IMR-90 (cell line): ENCODE measurements at regions of chr5 and their contacts with region 1.

Region 1: GRCh38 chr5:92909602-92909962 is 671.4 kb downstream of the NR2F1-AS1 start:
- DNase-seq: peak; percentile 11
- ATAC-seq: no peak
- H3K4me3 ChIP-seq: no peak overlapping the region
- H3K27ac ChIP-seq: no peak overlapping the region
- H3K4me1 ChIP-seq: peaks cover 3% of the 10 kb centered on the region
- H3K27me3 ChIP-seq: no peaks in the 10 kb centered on the region
- CTCF ChIP-seq: peak; percentile 43
- POLR2A ChIP-seq: no peak
- RAD21 ChIP-seq: peak; percentile 49

Region 2: GRCh38 chr5:92560698-92561361 is 348.8 kb before region 1 on chr5:
- CTCF ChIA-PET with region 1: no interaction called
- POLR2A ChIA-PET with region 1: no interaction called
- dilution Hi-C with region 1: no loop called
- in situ Hi-C with region 1: no loop called
- intact Hi-C with region 1: loop called (anchors 10 kb)
- DNase-seq: peak; percentile 59
- ATAC-seq: peak; percentile 24; the same call in 1 of the 2 replicates
- H3K4me3 ChIP-seq: no peak overlapping the region
- H3K27ac ChIP-seq: no peak overlapping the region
- H3K4me1 ChIP-seq: peaks cover 10% of the 10 kb centered on the region
- H3K27me3 ChIP-seq: no peaks in the 10 kb centered on the region
- CTCF ChIP-seq: no peak
- POLR2A ChIP-seq: no peak
- RAD21 ChIP-seq: no peak

Region 3: DNA sequence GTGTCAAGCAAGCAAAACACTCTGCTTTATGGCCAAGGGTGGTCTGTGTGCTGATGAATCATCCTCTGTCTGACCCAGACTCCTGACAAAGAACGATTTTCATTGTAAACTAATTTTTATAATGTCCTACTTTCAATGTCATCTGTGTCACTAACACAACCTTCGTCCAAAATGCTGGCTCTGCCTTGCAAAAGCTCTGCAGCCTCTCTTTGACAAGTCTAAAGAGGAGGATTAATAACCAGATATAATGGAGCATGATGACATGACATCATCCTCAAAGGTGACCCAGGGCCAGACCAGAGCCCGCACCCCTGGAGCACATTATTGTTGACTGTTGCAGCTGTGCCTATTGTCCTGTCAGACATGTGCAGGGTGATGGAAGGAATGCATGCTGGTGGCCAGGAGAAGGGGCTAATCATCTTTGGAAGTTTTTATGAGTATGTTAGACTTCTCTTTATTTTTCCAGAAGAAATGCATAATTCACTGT is 82.0 kb after region 1 on chr5:
- CTCF ChIA-PET with region 1: no interaction called
- POLR2A ChIA-PET with region 1: no interaction called
- dilution Hi-C with region 1: no loop called
- in situ Hi-C with region 1: no loop called
- intact Hi-C with region 1: loop called (anchors 5 kb)
- DNase-seq: peak; percentile 7
- ATAC-seq: 0 out of 2 replicates have a peak, but pooled peaks have one; percentile 17
- H3K4me3 ChIP-seq: no peak overlapping the region
- H3K27ac ChIP-seq: no peak overlapping the region
- H3K4me1 ChIP-seq: peaks cover 3% of the 10 kb centered on the region
- H3K27me3 ChIP-seq: no peaks in the 10 kb centered on the region
- CTCF ChIP-seq: no peak
- POLR2A ChIP-seq: no peak
- RAD21 ChIP-seq: no peak

Region 4: GRCh38 chr5:93053825-93054224 is 144.2 kb after region 1 on chr5:
- CTCF ChIA-PET with region 1: no interaction called
- POLR2A ChIA-PET with region 1: no interaction called
- dilution Hi-C with region 1: no loop called
- in situ Hi-C with region 1: no loop called
- intact Hi-C with region 1: no loop called
- DNase-seq: peak; percentile 83
- ATAC-seq: peak; percentile 78
- H3K4me3 ChIP-seq: no peak overlapping the region
- H3K27ac ChIP-seq: no peak overlapping the region; the same call in 1 of the 2 replicates
- H3K4me1 ChIP-seq: peaks cover 7% of the 10 kb centered on the region
- H3K27me3 ChIP-seq: no peaks in the 10 kb centered on the region
- CTCF ChIP-seq: no peak
- POLR2A ChIP-seq: no peak
- RAD21 ChIP-seq: no peak